B cell (primary cell): ENCODE measurements at regions of chr19 and their contacts with region 1.

Region 1: GRCh38 chr19:39390755-39391592 is at the starts of genes MED29 and PAF1:
- DNase-seq: peak; percentile 99
- ATAC-seq: peak; percentile 90
- H3K4me3 ChIP-seq: peak within 1 kb of the TSS; percentile 73 to 99 (median 90)
- H3K4me3 Mint-ChIP-seq: peak within 1 kb of the TSS; percentile 87
- H3K27ac ChIP-seq: peak within 1 kb of the TSS; percentile 96 to 97
- H3K27ac Mint-ChIP-seq: peak within 1 kb of the TSS; percentile 99
- H3K4me1 ChIP-seq: peaks cover 16 to 28% of the 10 kb centered on the region in 2 donors
- H3K4me1 Mint-ChIP-seq: peaks cover 39% of the 10 kb centered on the region
- H3K27me3 ChIP-seq: no peaks in the 10 kb centered on the region
- H3K27me3 Mint-ChIP-seq: no peaks in the 10 kb centered on the region
- CTCF ChIP-seq: no peak
- total RNA-seq, gene MED29: 47.5 and 53.0 TPM in 2 replicates
- total RNA-seq, gene PAF1: 54.6 and 59.9 TPM in 2 replicates

Region 2: DNA sequence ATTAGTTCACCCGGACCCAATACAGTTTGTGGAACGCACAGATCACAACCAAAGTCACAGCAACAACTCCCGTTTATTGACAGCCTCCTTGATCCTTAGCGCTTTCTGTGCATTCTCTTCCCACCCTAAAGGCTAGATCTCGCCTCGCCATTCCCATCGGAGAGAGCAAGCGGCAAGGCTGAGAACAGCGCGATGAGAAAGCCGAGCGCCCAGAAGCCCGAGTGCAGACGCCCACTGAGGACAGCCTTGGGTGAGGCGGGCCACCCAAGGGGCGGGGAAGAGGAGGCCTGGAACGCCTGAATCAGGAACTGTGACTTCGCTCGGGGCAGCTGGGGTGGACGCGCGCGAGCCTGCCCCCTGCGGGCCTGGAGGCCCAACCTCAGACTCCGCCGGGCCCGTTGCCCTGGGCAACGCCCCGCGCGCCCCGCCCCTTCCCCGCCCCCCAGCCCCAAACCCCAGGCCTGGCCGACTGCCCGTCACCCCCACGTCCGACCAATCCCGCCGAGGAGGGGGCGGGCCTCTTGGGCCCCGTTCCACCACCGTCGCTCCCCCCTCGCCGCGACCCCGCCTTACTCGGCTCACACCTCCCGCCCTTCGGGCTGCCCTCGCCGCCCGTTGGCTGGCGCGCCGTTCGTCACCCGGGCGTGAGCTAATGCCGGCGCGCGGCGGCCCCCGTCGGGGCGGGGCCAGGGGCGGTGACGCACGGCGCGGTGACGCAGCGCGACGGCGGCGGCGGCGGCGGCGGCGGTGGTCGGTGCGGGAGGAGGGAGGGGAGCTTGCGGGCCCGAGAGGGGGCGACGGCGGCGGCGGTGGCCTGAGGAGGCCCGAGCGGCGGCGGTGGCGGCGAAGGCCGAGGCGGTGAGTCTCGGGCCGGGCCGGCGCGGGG is 49.0 kb before region 1 on chr19 and contains the start of gene SAMD4B:
- CTCF ChIA-PET with region 1: interaction called, 9 read pairs
- POLR2A ChIA-PET with region 1: interaction called, 7 read pairs
- intact Hi-C with region 1: loop called (anchors 1 kb)
- DNase-seq: peak; percentile 99
- ATAC-seq: peak; percentile 92
- H3K4me3 ChIP-seq: peak within 1 kb of the TSS; percentile 88 to 98 (median 98)
- H3K4me3 Mint-ChIP-seq: peak within 1 kb of the TSS; percentile 97
- H3K27ac ChIP-seq: peak within 1 kb of the TSS; percentile 79 to 86
- H3K27ac Mint-ChIP-seq: peak within 1 kb of the TSS; percentile 95
- H3K4me1 ChIP-seq: peaks cover 32 to 46% of the 10 kb centered on the region in 2 donors
- H3K4me1 Mint-ChIP-seq: peaks cover 65% of the 10 kb centered on the region
- H3K27me3 ChIP-seq: no peaks in the 10 kb centered on the region
- H3K27me3 Mint-ChIP-seq: no peaks in the 10 kb centered on the region
- CTCF ChIP-seq: peak; percentile 81
- total RNA-seq, gene SAMD4B: 90.0 and 96.1 TPM in 2 replicates

Region 3: GRCh38 chr19:39372047-39372802 is 18.7 kb before region 1 on chr19:
- CTCF ChIA-PET with region 1: no interaction called
- POLR2A ChIA-PET with region 1: no interaction called
- intact Hi-C with region 1: no loop called
- DNase-seq: no peak
- ATAC-seq: no peak
- H3K4me3 ChIP-seq: no peak overlapping the region
- H3K4me3 Mint-ChIP-seq: no peak overlapping the region
- H3K27ac ChIP-seq: no peak overlapping the region
- H3K27ac Mint-ChIP-seq: no peak overlapping the region
- H3K4me1 ChIP-seq: no peaks in the 10 kb centered on the region
- H3K4me1 Mint-ChIP-seq: no peaks in the 10 kb centered on the region
- H3K27me3 ChIP-seq: no peaks in the 10 kb centered on the region
- H3K27me3 Mint-ChIP-seq: no peaks in the 10 kb centered on the region
- CTCF ChIP-seq: no peak

Region 4: DNA sequence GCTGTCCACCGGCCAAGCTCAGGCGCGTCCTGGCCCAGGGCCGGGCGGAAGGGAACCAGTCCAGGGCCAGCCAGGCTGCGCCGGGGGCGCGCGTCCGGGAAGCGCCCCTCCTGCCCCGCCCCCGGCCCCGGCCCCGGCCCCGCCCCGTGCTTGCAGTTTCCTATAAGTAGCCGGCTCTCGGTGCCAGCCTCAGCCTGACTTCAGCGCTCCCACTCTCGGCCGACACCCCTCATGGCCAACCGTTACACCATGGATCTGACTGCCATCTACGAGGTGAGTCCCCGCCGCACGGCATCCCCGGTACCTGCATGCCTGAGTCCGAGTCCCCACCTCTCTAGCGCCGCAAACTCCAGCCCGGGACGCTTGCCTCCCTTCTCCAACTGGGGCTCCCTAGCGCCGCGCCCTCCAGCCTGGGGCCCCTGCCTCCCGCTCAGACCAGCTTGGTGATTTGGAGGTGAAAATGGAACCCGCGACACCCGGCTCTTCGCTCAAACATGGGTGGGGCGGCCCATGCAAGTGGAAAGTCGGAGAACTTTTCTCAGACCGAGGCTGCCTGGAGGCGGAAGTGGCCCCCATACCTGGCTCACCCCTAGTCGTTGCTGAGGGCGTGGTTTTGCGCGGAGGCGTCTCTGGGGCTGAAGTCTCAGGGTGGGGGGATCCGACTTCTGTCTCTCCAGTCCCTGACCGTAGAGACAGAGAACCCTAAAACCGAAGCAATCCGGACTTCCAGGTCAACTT is 15.9 kb after region 1 on chr19 and contains the start of gene ZFP36:
- CTCF ChIA-PET with region 1: interaction called, 260 read pairs
- POLR2A ChIA-PET with region 1: interaction called, 69 read pairs
- intact Hi-C with region 1: loop called (anchors 1 kb)
- DNase-seq: peak; percentile 92
- ATAC-seq: peak; percentile 22
- H3K4me3 ChIP-seq: peak within 1 kb of the TSS; percentile 87 to 99 (median 95)
- H3K4me3 Mint-ChIP-seq: peak within 1 kb of the TSS; percentile 94
- H3K27ac ChIP-seq: peak within 1 kb of the TSS; percentile 100
- H3K27ac Mint-ChIP-seq: peak within 1 kb of the TSS; percentile 97
- H3K4me1 ChIP-seq: peaks cover 46 to 69% of the 10 kb centered on the region in 2 donors
- H3K4me1 Mint-ChIP-seq: peaks cover 63% of the 10 kb centered on the region
- H3K27me3 ChIP-seq: no peaks in the 10 kb centered on the region
- H3K27me3 Mint-ChIP-seq: no peaks in the 10 kb centered on the region
- CTCF ChIP-seq: no peak
- total RNA-seq, gene ZFP36: 252 and 260 TPM in 2 replicates

Region 5: GRCh38 chr19:39412100-39412866 is 21.3 kb after region 1 on chr19 and contains the start of gene PLEKHG2:
- CTCF ChIA-PET with region 1: interaction called, 260 read pairs
- POLR2A ChIA-PET with region 1: interaction called, 69 read pairs
- intact Hi-C with region 1: loop called (anchors 1 kb)
- DNase-seq: peak; percentile 99
- ATAC-seq: peak; percentile 53
- H3K4me3 ChIP-seq: peak within 1 kb of the TSS; percentile 74 to 98 (median 92)
- H3K4me3 Mint-ChIP-seq: peak within 1 kb of the TSS; percentile 94
- H3K27ac ChIP-seq: peak within 1 kb of the TSS; percentile 100
- H3K27ac Mint-ChIP-seq: peak within 1 kb of the TSS; percentile 99
- H3K4me1 ChIP-seq: peaks cover 24 to 40% of the 10 kb centered on the region in 2 donors
- H3K4me1 Mint-ChIP-seq: peaks cover 49% of the 10 kb centered on the region
- H3K27me3 ChIP-seq: no peaks in the 10 kb centered on the region
- H3K27me3 Mint-ChIP-seq: no peaks in the 10 kb centered on the region
- CTCF ChIP-seq: no peak
- total RNA-seq, gene PLEKHG2: 154 and 167 TPM in 2 replicates

Region 6: GRCh38 chr19:39428283-39429112 is 37.5 kb after region 1 on chr19:
- CTCF ChIA-PET with region 1: no interaction called
- POLR2A ChIA-PET with region 1: no interaction called
- intact Hi-C with region 1: no loop called
- DNase-seq: no peak
- ATAC-seq: no peak
- H3K4me3 ChIP-seq: no peak overlapping the region
- H3K4me3 Mint-ChIP-seq: no peak overlapping the region
- H3K27ac ChIP-seq: no peak overlapping the region
- H3K27ac Mint-ChIP-seq: peak overlapping the region; percentile 59
- H3K4me1 ChIP-seq: peaks cover 0 to 8% of the 10 kb centered on the region in 2 donors
- H3K4me1 Mint-ChIP-seq: peaks cover 16% of the 10 kb centered on the region
- H3K27me3 ChIP-seq: no peaks in the 10 kb centered on the region
- H3K27me3 Mint-ChIP-seq: no peaks in the 10 kb centered on the region
- CTCF ChIP-seq: no peak

Region 7: DNA sequence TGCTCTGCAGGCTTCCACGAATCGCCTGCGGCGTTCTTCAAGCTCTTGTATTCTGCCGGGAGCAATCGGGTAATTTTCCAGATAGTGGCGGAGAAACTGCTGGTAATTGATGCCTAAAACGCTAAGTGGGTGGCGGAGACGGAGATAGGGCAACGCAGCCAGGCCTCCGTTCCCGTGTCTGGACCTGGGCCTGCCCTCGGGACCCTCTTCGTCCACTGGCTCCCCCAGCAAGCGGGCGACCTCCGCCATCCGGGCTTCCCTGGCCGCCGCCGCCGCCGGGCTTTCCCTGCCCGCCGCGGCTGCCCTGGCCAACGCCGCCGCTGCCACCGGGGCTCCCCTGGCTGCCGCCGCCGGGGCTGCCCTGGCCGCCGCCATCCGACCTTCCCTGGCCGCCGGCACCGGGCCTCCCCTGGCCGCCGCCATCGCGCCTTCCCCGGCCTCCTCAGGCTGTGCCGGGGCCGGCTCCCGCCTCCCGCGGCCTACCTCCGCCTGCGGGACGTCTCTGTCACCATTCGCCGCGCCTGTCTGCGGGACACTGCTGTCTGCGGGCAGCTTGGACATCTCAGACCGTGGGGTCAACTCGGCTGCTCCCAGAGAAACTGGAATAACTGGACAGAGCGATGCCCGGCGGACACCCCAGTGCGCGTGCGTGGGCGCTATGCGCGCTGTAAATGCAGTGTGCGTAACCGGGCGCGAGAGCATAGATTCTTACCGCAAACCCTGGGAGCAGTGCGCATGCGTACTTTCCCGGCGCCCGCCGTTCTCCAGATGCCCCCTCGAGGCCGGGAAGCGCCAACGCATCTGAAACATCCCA is 148.8 kb after region 1 on chr19 and contains the start of gene EID2:
- CTCF ChIA-PET with region 1: no interaction called
- POLR2A ChIA-PET with region 1: no interaction called
- intact Hi-C with region 1: loop called (anchors 2 kb)
- DNase-seq: peak; percentile 96
- ATAC-seq: peak; percentile 94
- H3K4me3 ChIP-seq: peak within 1 kb of the TSS; percentile 66 to 97 (median 86)
- H3K4me3 Mint-ChIP-seq: peak within 1 kb of the TSS; percentile 98
- H3K27ac ChIP-seq: peak within 1 kb of the TSS; percentile 74 to 83
- H3K27ac Mint-ChIP-seq: peak within 1 kb of the TSS; percentile 93
- H3K4me1 ChIP-seq: peaks cover 21 to 26% of the 10 kb centered on the region in 2 donors
- H3K4me1 Mint-ChIP-seq: peaks cover 41% of the 10 kb centered on the region
- H3K27me3 ChIP-seq: no peaks in the 10 kb centered on the region
- H3K27me3 Mint-ChIP-seq: no peaks in the 10 kb centered on the region
- CTCF ChIP-seq: peak; percentile 80
- total RNA-seq, gene EID2: 13.8 and 14.1 TPM in 2 replicates